Mammary epithelial cell (primary cell): ENCODE measurements at regions of chrX and their contacts with region 1.

Region 1: GRCh38 chrX:46912098-46912602 is at the start of gene JADE3:
- DNase-seq: peak; percentile 67
- H3K4me3 ChIP-seq: peak within 1 kb of the TSS; percentile 47 to 68 (median 56)
- H3K27ac ChIP-seq: peak within 1 kb of the TSS; percentile 5
- H3K4me1 ChIP-seq: no peaks in the 10 kb centered on the region
- H3K27me3 ChIP-seq: no peaks in the 10 kb centered on the region
- CTCF ChIP-seq: no peak
- total RNA-seq, gene JADE3: 7.5 to 12.5 TPM

Region 2: GRCh38 chrX:46935295-46935694 is 23.1 kb after region 1 on chrX:
- CTCF ChIA-PET with region 1: no interaction called
- dilution Hi-C with region 1: no loop called
- in situ Hi-C with region 1: no loop called
- intact Hi-C with region 1: no loop called
- DNase-seq: no peak
- H3K4me3 ChIP-seq: no peak overlapping the region
- H3K27ac ChIP-seq: no peak overlapping the region
- H3K4me1 ChIP-seq: peaks cover 9% of the 10 kb centered on the region
- H3K27me3 ChIP-seq: no peaks in the 10 kb centered on the region
- CTCF ChIP-seq: no peak

Region 3: DNA sequence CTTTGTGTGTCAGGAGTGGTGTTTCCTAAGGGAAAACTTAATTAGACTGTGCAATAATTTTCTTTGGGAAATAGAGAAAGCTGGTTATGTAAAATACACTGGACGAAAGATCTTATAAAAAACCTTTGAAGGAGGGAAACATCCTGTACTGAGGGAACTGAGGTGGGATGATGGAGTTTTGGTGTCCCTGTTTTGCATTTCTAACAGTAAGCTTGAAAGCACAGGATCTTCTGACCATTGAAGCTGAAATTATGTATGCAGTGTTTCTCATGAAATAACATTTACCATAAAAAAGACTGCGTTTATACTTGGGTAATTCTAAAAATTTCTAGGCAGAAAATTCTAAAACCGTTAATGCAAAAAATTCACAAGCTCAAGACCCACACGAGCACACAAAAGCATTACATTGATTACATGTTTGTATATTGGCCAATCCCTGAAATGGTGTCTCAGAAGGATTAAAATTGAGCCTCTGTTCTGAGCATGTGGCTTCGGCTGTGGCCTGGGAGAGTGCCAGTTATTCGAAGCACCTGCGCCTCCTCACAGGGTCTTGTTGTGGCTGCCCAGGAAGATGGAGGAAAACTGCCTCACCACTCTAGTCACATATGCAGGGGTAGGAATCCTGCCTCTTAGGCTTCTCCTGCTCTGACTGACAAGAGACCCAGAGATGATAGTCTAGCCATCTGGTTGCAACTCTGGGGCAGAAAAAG is 49.6 kb after region 1 on chrX:
- CTCF ChIA-PET with region 1: interaction called, 4 read pairs
- dilution Hi-C with region 1: no loop called
- in situ Hi-C with region 1: no loop called
- intact Hi-C with region 1: loop called (anchors 5 kb)
- DNase-seq: no peak
- H3K4me3 ChIP-seq: no peak overlapping the region
- H3K27ac ChIP-seq: no peak overlapping the region
- H3K4me1 ChIP-seq: peaks cover 24% of the 10 kb centered on the region
- H3K27me3 ChIP-seq: no peaks in the 10 kb centered on the region
- CTCF ChIP-seq: no peak

Region 4: DNA sequence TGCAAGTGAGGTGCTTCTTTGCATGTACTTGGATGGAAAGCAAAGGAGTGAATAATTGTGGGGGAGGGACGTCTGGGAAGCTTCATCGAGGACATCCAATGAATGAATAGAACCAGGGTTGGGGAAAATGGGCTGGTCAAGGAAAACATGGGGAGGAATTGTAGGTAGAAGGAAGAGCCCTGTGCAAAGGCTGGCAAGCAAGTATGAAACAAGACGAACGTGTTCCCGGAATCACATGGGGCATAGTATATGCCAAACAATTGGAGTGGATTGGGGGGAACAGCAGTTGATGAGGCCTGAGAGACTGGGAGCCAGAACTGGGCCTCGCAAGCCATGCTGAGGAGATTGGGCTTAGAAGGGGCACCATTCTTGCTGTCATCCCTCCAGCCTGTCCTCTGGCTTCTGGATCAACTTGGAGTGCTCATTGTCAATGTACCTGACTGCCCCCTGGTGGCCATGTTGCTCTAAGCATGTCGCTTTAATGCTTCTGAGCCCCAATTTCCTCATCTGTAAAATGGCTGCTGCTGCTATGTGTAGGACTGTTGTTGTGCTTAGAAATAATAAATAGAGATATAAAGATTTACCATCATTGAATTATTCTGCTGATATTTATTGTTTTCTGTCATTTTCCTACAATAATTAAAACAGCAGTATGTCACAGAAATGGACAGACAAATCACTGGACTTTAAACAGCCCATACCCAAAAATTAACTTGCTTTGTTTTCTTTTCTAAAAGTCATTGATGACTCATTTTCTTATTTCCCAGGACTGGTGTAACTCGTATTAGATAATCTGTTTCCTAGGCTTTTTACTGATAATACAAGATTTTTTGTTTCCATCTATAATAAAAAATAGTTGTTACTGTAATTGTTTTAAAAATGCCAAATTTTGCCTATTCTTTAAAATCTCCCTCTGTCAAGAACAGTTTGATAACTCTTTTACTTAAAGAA is 66.5 kb after region 1 on chrX:
- CTCF ChIA-PET with region 1: interaction called, 7 read pairs
- dilution Hi-C with region 1: no loop called
- in situ Hi-C with region 1: loop called in 1 of 2 experiments (anchors 10 kb)
- intact Hi-C with region 1: loop called (anchors 1 kb)
- DNase-seq: peak; percentile 62
- H3K4me3 ChIP-seq: no peak overlapping the region
- H3K27ac ChIP-seq: peak overlapping the region; percentile 30
- H3K4me1 ChIP-seq: peaks cover 4% of the 10 kb centered on the region
- H3K27me3 ChIP-seq: peaks cover 4% of the 10 kb centered on the region
- CTCF ChIP-seq: peak; percentile 71 to 86